Activated CD4-positive, alpha-beta memory T cell treated with anti-CD3 and anti-CD28 coated beads for 36 hours (primary cell): ENCODE measurements at regions of chr6 and their contacts with region 1.

Region 1: GRCh38 chr6:4936681-4937041 is 67.2 kb downstream of the RPP40 start:
- DNase-seq: no peak
- H3K4me3 Mint-ChIP-seq: no peak overlapping the region
- H3K27ac Mint-ChIP-seq: no peak overlapping the region
- H3K4me1 Mint-ChIP-seq: peaks cover 50% of the 10 kb centered on the region
- H3K27me3 Mint-ChIP-seq: no peaks in the 10 kb centered on the region

Region 2: GRCh38 chr6:3868544-3868943 is 1068.1 kb before region 1 on chr6:
- CTCF ChIA-PET with region 1: no interaction called
- POLR2A ChIA-PET with region 1: no interaction called
- intact Hi-C with region 1: loop called (anchors 5 kb)
- DNase-seq: no peak
- H3K4me3 Mint-ChIP-seq: peak overlapping the region; percentile 24
- H3K27ac Mint-ChIP-seq: peak overlapping the region; percentile 92
- H3K4me1 Mint-ChIP-seq: peaks cover 45% of the 10 kb centered on the region
- H3K27me3 Mint-ChIP-seq: peaks cover 8% of the 10 kb centered on the region

Region 3: DNA sequence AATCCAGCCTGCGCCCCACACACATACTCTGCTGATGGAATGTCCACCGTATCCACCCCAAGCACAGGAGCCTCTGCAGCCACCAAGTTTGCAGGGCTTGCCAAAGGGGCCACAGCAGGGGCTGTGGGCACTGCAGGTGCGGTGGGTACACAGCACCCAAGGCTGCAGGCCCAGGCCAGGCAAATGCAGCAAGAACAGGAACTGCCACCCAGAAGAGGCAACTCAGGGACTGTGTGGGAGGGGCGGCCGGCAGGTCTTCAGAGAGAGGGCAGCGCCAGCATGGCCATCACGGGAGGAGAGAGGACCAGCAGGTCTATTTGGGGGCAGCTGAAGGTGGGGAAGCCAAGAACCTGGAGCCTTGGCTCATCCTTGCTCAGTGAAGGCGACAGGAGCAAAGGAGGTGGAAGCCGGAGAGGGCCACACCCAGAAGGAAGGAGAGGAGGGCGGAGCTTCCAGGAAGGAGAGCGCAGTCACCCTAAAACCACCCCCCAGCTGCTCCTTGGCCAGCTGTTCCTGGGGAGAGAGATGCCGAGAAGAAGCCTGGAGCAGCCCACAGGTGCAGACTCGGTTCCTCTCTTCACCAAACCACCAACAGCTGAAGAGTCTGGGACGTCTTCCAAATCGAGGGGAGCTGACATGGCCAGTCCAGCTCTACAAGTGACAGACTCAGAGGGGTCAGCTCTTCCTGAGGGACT is 425.6 kb before region 1 on chr6:
- CTCF ChIA-PET with region 1: no interaction called
- POLR2A ChIA-PET with region 1: no interaction called
- intact Hi-C with region 1: no loop called
- DNase-seq: no peak
- H3K4me3 Mint-ChIP-seq: no peak overlapping the region
- H3K27ac Mint-ChIP-seq: no peak overlapping the region
- H3K4me1 Mint-ChIP-seq: no peaks in the 10 kb centered on the region
- H3K27me3 Mint-ChIP-seq: peaks cover 6% of the 10 kb centered on the region

Region 4: DNA sequence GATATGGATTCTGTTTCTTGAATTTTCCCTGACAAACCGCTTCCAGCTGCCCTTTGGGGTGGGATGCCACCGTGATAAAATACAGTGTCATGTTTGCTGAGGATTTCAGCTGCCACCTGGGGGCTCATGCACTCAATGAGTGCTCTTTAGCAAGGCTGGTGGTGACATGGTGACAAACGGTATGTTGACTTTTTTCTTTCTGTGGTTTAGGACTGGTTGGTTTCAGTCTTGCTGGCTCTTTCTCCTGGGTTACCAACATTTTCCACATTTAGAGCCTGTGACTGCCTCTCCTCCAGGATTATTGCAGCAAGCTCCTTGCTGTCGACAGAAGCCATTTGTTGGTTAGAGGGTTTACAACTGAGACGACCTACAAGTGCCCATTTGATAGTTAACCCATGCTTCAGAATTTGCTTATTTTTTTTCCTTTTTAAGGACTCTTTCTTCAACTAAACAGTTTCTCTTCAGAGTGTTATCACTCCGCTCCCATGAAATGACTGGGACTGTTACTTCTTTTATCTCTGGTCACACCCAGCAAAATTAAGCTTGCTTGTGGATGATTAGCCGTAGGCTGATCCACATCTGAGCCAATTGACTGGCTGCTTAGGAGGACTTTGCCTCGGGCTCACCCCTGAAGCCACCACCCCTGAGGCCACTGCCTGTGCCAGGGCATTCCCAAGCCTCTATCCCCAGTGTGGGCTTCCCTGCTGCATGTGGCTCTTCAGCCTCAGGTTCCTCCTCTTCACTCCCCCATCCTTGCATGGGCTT is 208.8 kb before region 1 on chr6:
- CTCF ChIA-PET with region 1: no interaction called
- POLR2A ChIA-PET with region 1: no interaction called
- intact Hi-C with region 1: loop called (anchors 2 kb)
- DNase-seq: peak; percentile 26
- H3K4me3 Mint-ChIP-seq: no peak overlapping the region
- H3K27ac Mint-ChIP-seq: no peak overlapping the region
- H3K4me1 Mint-ChIP-seq: peaks cover 8% of the 10 kb centered on the region
- H3K27me3 Mint-ChIP-seq: peaks cover 20% of the 10 kb centered on the region

Region 5: DNA sequence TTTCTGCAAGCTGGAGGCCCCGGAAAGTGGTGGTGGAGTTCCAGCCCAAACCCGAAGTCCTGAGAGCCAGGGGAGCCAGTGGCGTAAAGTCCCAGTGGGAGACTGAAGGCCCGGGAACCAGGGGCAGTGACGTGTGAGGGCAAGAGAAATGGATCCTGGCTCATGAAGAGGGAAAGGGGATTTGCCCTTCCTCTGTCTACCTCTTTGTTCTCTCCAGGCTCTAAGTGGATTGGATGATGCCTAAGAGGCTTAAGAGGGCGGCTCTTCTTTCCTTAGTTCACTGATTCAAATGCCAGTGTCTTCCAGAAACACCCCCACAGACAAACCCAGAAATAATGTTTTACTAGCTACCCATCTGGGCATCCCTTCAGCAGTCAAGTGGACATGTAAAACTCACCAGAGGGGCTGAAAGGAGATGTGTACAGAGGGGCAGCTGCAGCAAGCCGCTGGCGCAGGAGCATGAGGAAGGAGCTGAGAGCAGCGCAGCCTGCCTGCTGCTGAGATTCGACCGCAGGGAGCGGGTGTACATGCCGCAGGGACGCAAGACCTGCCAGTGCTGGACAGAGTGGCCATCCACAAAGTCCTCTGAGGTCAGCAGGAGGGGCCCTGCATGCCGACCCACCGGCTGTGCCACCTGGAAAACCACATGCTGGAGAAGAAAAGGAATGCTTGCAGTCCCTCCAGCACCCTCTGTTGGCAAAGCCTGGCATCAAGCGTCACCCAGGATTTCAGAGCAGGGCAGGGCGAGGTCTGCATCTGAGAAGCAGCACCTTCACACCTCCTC is 130.9 kb before region 1 on chr6:
- CTCF ChIA-PET with region 1: interaction called, 3 read pairs
- POLR2A ChIA-PET with region 1: interaction called, 3 read pairs
- intact Hi-C with region 1: loop called (anchors 5 kb)
- DNase-seq: peak; percentile 44
- H3K4me3 Mint-ChIP-seq: no peak overlapping the region
- H3K27ac Mint-ChIP-seq: no peak overlapping the region
- H3K4me1 Mint-ChIP-seq: peaks cover 80% of the 10 kb centered on the region
- H3K27me3 Mint-ChIP-seq: no peaks in the 10 kb centered on the region